ENCODE measurements at regions of chr11 and their contacts with region 1.

Region 1: GRCh38 chr11:130571519-130571918 is 123.1 kb downstream of the ADAMTS15 start:
- DNase-seq: no peak
- ATAC-seq: no peak
- H3K4me3 ChIP-seq: no peak overlapping the region
- H3K27ac ChIP-seq: no peak overlapping the region
- H3K4me1 ChIP-seq: peaks cover 0 to 6% (median 0%) of the 10 kb centered on the region in 12 donors
- H3K27me3 ChIP-seq: no peaks in the 10 kb centered on the region
- CTCF ChIP-seq: no peak
- POLR2A ChIP-seq: no peak

Region 2: DNA sequence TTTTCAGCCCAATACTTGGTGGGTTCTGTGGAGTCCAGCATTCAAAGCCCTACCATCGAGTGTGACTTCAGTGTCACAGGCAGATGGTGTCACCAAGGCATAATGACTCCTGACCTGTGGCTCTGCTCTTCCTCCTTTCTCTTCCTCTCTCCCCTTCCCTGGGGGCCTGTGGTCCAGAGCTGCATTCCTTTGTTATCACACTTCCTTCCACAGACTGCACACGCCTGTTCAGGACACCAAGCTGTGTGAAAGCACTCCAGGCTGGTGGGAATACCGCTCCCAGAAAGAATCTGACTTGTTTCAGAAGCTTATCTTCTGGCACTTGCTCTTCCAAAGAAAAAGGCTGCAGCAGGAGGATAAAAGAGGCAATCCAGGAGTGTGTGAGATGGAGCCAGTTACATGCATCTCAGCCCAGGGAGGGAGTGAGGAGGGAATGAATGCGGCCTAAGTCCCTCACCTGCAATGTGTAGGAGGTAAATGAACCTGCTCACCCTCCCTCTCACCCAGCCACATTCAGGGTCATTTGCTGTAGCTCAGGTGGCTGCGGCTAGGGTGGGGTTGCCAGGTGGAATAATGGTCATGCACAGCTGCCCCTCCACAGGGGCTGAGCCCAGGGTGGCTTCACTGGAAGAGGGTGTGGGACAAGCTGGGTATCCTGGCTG is 43.8 kb before region 1 on chr11:
- intact Hi-C with region 1: loop called in 1 of 10 experiments (anchors 5 kb)
- DNase-seq: peak; percentile 51 to 63 (median 63)
- ATAC-seq: peak; percentile 18 to 72 (median 62)
- H3K4me3 ChIP-seq: no peak overlapping the region
- H3K27ac ChIP-seq: peak overlapping the region in 11 of 12 donors; percentile 6 to 72 (median 49)
- H3K4me1 ChIP-seq: peaks cover 10 to 46% (median 33%) of the 10 kb centered on the region in 12 donors
- H3K27me3 ChIP-seq: no peaks in the 10 kb centered on the region
- CTCF ChIP-seq: no peak
- POLR2A ChIP-seq: no peak

Region 3: GRCh38 chr11:130798280-130798679 is 226.8 kb after region 1 on chr11:
- intact Hi-C with region 1: no loop called
- DNase-seq: no peak
- ATAC-seq: no peak
- H3K4me3 ChIP-seq: no peak overlapping the region
- H3K27ac ChIP-seq: no peak overlapping the region
- H3K4me1 ChIP-seq: no peaks in the 10 kb centered on the region
- H3K27me3 ChIP-seq: no peaks in the 10 kb centered on the region
- CTCF ChIP-seq: no peak
- POLR2A ChIP-seq: no peak